HEK293T (cell line): ENCODE measurements at regions of chr17 and their contacts with region 1.

Region 1: GRCh38 chr17:68260051-68260762 is 12.4 kb downstream of the AMZ2 start:
- DNase-seq: no peak

Region 2: DNA sequence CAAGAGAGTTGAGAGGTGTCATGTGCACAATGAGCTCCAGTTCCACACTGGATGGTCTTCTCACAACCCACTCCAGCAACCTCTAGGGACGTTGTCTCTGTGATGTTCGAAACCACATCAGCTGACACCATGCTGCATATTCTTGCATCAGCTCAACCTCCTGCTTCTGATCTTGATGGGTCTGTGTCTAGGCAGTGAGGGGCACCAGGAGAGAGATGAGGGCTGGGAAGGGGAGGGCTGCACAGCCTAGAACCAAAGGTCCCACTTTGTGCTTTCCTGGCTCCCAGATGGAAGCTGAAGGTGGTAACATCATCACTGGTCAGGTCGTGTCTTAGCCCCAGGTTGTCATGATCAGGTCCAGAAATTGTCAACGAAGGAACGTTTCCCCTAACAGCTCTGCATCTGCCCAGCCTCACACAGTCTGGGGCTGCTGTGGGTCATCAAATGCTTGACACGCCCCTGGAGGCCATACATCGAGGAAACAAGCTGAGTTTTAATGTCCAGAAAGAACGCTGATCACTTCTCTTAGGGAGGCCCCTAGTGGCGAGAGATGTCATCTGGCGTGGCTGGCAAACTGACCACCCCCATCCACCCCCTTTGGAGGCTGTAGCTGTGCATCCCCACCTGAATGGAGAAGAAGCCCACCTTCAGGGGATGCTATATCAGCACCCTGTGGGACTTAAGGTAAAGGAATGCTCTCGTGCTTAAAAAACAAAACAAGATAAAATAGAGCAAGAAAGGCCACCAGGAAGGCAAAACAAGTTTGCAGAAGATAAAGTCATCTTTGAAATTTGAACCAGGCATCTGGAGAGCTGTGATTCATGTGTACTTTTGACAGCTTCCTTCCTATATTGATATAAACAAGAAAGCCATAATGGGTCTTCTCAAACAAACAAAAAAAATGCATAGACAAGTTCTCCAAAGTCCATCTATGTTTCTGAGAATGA is 138.8 kb after region 1 on chr17:
- CTCF ChIA-PET with region 1: interaction called, 12 read pairs
- POLR2A ChIA-PET with region 1: no interaction called
- DNase-seq: peak; percentile 88